ENCODE measurements at regions of chr5 and their contacts with region 1.

Region 1: DNA sequence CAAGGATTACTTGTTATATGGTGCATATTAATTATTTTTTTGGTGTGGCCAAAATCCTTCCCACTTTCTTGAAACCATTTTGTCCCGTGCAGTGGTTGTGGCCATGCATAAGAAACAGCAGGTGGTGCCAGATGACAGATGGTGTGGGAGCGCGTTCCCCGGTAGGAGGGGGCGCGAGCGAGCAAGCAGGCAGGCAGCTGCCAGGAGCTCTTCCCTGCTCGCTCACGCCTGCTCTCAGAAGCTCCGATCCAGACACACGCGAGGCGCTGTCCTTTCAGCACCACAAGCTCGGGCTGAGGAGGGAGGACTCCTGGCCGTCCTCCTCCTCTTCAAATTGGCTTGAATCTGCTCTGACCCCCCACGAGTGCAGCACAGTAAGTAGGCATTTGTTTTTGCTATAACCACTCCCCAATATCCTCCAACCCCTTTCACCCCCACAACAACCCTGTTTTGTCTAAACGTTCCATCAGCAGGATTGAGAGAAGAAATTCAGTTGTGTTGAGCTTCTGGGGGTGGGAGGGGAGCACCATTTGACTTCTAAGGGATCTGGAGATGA is at the start of gene NSG2:
- ATAC-seq: peak; percentile 99 to 100 (median 100)
- H3K4me3 ChIP-seq: peak within 1 kb of the TSS; percentile 26 to 45 (median 40)
- H3K27ac ChIP-seq: no peak within 1 kb of the TSS
- H3K4me1 ChIP-seq: peaks cover 0 to 26% of the 10 kb centered on the region in 2 donors
- total RNA-seq, gene NSG2: 0.51 to 186 (median 119) TPM in 7 of 8 experiments, not detected in the other

Region 2: DNA sequence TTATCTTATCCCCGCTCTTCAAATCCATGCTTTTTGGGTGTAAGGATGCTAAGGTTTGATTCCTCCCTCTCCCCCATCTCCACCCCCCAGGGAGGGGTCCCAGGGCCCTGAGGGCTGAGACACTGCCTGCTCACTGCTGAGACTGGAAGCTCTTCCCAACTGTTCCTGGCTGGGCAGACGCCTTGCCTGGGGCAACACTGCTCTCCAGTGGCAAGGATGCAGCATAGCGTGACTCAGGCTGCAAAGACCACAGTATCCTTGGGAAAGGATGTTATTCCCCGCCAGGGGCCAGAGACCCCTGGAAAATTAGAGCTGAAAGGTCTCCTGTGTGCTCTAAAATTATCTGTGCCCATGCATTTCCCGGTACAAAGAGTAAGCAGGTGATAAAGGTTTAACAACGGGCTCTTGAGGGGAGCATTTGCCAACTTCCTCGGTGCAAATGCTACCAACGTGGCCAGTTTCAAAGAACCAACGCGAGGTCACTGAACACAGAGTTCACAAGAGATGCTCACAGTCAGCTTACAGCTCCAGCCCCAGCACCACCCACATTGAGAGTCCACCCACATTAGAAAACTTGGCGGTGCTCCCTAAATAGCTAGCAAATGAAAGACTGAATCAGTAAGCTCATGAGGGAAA is 271.8 kb after region 1 on chr5:
- in situ Hi-C with region 1: loop called in 8 of 9 experiments (anchors 5 to 25 kb)
- ATAC-seq: peak; percentile 88 to 97 (median 94)
- H3K4me3 ChIP-seq: no peak overlapping the region
- H3K27ac ChIP-seq: no peak overlapping the region
- H3K4me1 ChIP-seq: peaks cover 2 to 3% of the 10 kb centered on the region in 2 donors

Measured in motor neuron (in vitro differentiated cells).